A549 (cell line): ENCODE measurements at regions of chr5 and their contacts with region 1.

Region 1: DNA sequence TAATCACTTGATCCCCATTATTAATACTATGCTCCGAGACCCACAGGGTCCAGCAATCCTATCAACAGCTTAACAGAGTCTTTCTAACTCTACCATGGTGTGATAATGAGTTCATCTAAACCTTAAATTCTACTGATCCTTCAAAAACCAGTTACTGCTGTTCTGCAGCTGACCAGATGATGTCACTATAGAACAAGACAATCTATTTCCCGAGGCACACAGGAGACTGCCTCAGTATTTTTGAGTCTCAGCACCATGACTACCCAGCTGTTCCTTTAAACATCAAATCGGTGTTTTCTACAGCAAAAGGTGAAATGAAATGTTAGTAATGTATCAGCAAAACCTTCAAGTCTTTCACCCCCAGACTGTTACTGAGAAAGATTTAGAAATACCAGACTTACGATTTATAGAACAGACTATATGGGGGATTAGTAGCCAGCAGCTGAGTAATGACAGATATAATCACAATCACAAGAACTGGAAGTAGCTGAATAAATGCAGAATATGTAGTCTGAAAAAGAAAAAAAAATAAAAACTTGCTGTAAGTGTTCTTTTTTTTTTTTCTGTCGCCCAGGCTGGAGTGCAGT is 16.9 kb downstream of the DNAJC18 start:
- DNase-seq: peak; percentile 69 to 85
- ATAC-seq: peak; percentile 87 to 92
- H3K4me3 ChIP-seq: no peak overlapping the region
- H3K27ac ChIP-seq: no peak overlapping the region
- H3K4me1 ChIP-seq: no peaks in the 10 kb centered on the region
- CTCF ChIP-seq: peak; percentile 95
- EP300 ChIP-seq: no peak
- POLR2A ChIP-seq: no peak
- RAD21 ChIP-seq: peak; percentile 92 to 97

Region 2: DNA sequence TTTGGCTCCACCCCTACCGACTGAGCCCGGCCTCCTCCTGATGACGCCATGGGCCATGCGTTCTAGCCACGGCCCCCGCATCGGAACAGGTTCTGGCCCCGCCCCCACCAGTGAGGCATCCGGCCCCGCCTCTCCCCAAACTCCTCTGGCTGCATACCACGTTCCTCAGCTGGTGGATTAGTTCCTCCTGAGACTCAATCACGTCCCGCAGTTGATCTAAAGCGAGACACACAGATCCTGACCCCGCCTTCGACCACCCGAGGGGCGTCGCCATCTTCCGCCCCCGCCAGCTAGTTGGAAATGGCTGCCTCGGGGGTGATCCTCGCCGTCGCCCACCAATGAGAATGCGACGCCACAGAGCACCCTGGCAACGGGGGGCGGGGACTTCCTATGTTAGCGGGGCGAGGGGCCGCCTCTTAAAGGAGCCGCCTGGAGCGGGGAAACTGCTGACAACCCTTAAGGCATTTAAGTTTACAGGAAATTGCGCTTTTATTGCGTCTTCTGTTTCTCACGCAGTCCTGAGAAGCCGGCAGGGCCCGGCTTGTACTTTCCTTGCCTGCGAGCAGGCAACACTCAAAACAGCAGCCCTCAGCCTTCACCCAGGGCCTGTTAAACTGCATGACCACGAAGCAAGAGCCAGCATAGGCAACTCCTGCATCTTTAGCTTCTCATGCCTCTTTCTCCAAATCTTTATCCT is 18.5 kb before region 1 on chr5 and contains the start of gene SPATA24:
- CTCF ChIA-PET with region 1: interaction called, 57 read pairs
- POLR2A ChIA-PET with region 1: no interaction called
- DNase-seq: peak; percentile 96 to 97
- ATAC-seq: peak; percentile 89 to 95
- H3K4me3 ChIP-seq: peak within 1 kb of the TSS; percentile 45
- H3K27ac ChIP-seq: peak within 1 kb of the TSS; percentile 86 to 91
- H3K4me1 ChIP-seq: peaks cover 12% of the 10 kb centered on the region
- CTCF ChIP-seq: no peak
- EP300 ChIP-seq: no peak
- POLR2A ChIP-seq: peak; percentile 36
- RAD21 ChIP-seq: no peak
- polyA plus RNA-seq, gene SPATA24: 4.5 and 5.7 TPM in 2 replicates

Region 3: DNA sequence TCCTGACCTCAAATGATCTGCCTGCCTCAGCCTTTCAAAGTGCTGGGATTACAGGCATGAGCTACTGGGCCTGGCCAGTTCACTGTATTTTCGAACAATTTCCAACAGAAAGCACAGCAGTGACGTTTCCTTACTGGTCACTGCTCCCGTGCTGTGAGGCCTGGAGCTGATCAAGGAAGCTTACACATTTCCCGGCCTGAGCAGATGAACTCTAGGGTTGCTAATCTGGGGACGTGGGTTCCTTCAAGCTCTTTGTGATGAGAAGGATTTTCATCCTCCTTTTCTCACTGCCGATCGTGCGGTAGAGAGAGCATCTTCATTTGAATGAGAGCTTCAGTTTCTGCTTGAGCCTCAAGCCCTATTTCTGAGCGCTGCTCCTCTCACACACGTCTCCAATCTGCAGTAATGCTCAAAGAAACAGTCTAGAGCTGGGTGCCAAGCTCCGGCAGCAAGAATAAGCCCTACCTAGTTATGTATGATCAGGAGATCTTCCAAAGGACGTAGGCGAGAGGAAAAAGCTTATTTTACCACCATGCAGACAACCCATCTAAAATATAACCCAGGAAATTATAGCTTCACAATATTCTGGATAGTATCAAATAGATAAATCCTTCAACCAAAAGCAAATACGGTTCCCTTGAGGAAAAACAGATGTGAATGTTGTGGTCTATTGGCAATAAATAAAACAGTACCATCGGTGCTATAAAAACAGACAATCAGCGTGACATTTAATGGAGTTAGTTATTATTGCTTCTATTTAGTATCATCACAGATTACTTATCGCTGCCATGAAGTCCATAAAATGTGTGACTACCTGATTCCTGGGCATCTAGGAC is 11.2 kb before region 1 on chr5:
- CTCF ChIA-PET with region 1: interaction called, 57 read pairs
- POLR2A ChIA-PET with region 1: no interaction called
- DNase-seq: no peak
- ATAC-seq: no peak
- H3K4me3 ChIP-seq: no peak overlapping the region
- H3K27ac ChIP-seq: no peak overlapping the region
- H3K4me1 ChIP-seq: no peaks in the 10 kb centered on the region
- CTCF ChIP-seq: no peak
- EP300 ChIP-seq: no peak
- POLR2A ChIP-seq: no peak
- RAD21 ChIP-seq: no peak

Region 4: DNA sequence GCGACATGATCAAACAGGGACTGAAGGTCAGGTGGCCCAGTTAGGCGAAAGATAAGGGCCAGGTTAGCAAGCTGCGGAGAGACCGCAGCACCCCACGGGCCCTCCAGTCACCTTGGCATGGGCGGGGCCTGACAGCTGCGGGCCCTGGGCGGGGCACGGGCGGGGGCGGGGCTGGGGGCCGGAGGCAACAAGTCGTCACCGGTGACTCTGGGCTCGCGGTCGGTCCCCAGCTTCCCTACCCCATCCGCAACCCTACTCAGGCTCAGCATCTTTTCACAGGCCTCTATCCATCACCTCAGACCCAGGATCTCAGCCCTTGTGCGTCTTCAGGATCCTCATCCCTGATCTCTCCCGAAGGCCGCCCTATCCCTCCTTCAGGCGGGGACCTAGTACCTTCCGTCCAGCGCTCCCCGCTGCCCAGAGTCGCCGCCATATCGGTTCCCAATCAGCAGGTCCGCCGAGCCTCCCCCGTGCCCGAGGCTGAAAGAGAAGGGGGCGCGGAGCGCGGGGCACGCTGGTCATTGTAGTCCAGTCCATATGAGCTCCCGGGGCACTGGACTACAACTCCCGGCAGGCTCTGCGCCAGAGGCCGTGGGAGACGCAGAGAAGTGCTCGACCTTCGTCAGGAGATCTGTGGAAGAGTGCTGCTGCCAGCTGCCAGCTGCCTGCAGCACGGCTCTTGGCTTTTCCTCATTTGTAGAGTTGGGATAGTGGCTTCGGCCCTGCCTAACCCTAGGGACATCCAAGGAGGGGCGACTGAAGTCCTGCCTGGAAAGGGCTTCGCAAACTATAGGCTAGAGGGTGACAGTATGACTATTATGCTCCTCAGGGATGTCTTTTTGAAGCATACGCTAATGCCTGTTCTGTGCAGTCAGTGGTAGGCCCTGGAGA is 16.9 kb after region 1 on chr5 and contains the start of gene DNAJC18:
- CTCF ChIA-PET with region 1: interaction called, 88 read pairs
- POLR2A ChIA-PET with region 1: interaction called, 3 read pairs
- DNase-seq: peak; percentile 85 to 95
- ATAC-seq: peak; percentile 98 to 99
- H3K4me3 ChIP-seq: peak within 1 kb of the TSS; percentile 73
- H3K27ac ChIP-seq: peak within 1 kb of the TSS; percentile 81 to 90
- H3K4me1 ChIP-seq: peaks cover 8% of the 10 kb centered on the region; the same call in 1 of the 3 replicates
- CTCF ChIP-seq: no peak
- EP300 ChIP-seq: no peak
- POLR2A ChIP-seq: peak; percentile 38
- RAD21 ChIP-seq: no peak
- polyA plus RNA-seq, gene DNAJC18: 5.3 TPM in 2 replicates

Region 5: DNA sequence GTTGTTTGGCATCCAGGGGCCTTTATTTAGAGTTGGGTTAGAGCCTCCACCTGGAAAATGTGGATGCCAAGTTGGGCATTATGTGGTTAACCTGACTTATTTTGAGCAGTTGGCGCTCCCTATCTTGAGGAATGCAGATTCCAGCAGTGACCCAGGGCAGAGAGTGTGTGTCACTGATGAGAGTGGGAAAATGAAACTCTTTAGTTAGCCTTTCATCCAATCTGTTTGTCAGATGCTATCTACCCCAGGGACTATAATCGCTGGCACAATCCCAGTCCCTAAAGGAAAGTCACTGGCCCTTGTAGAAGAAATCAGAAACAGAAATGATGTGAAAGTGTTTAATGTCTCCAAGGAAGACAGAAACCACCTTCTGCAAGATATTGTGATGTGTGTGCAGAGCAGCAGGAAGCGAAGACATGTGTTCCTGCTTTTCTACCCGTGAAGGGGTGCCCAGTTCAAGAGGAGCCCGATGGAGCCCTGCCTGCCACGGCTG is 70.3 kb after region 1 on chr5:
- CTCF ChIA-PET with region 1: interaction called, 19 read pairs
- POLR2A ChIA-PET with region 1: no interaction called
- DNase-seq: peak in 1 of 2 experiments; percentile 29
- ATAC-seq: peak in 1 of 2 experiments; percentile 62; a peak in 3 of 6 replicates
- H3K4me3 ChIP-seq: no peak overlapping the region
- H3K27ac ChIP-seq: no peak overlapping the region
- H3K4me1 ChIP-seq: peaks cover 16% of the 10 kb centered on the region
- CTCF ChIP-seq: no peak
- EP300 ChIP-seq: no peak
- POLR2A ChIP-seq: no peak
- RAD21 ChIP-seq: no peak

Region 6: GRCh38 chr5:139501381-139501780 is 79.0 kb after region 1 on chr5:
- CTCF ChIA-PET with region 1: interaction called, 22 read pairs
- POLR2A ChIA-PET with region 1: no interaction called
- DNase-seq: no peak
- ATAC-seq: no peak
- H3K4me3 ChIP-seq: no peak overlapping the region
- H3K27ac ChIP-seq: no peak overlapping the region
- H3K4me1 ChIP-seq: peaks cover 1% of the 10 kb centered on the region; the same call in 2 of the 3 replicates
- CTCF ChIP-seq: no peak
- EP300 ChIP-seq: no peak
- POLR2A ChIP-seq: no peak
- RAD21 ChIP-seq: no peak

Region 7: DNA sequence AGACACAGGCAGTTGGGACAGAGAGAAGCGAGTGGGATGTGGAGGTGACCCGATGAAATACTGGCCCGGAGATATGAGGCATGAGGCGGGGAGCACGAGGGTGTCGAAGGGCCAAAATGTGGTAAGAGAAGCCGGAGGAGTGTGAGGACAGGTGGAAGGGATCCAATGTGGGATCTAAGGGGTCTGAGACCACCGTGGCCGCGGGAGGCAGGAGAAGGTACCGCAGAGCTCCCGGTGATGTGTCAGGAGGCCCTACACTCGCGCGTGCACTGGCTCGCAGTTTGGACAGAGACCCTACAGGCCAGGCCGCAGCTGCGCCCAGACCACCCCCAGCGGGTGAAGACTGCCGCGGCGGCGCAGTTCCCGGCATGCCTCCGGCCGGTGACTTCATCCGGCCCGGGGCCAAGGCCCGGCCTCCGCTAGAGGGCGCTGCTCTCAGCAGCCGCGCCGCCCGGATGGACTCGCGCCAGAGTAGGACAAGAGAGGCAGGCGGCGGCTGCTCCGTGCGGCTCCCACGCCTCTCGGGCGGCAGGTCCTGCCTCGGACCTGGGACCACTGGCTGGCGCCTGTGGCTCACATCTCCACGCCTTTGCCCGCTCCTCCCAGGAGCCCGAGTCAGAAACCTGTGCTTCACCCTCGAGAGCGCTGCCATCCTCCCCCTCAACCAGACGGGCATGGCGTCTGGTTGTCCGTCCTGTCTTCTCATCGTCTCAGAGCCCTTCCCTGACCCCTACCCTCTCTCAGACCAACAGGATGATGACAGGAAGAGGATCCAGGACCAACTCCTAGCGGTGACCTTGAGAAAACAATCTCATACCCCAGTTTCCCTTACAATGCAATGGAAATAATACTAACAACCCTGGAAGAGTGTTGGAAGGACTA is 95.5 kb after region 1 on chr5:
- CTCF ChIA-PET with region 1: interaction called, 392 read pairs
- POLR2A ChIA-PET with region 1: no interaction called
- DNase-seq: peak; percentile 89 to 94
- ATAC-seq: peak; percentile 86 to 91
- H3K4me3 ChIP-seq: peak overlapping the region; percentile 50
- H3K27ac ChIP-seq: peak overlapping the region; percentile 91 to 92
- H3K4me1 ChIP-seq: 0 out of 3 replicates have a peak, but pooled peaks cover 3% of the 10 kb centered on the region
- CTCF ChIP-seq: peak; percentile 98
- EP300 ChIP-seq: no peak; a peak in 1 of 5 replicates
- POLR2A ChIP-seq: peak; percentile 84
- RAD21 ChIP-seq: peak; percentile 48 to 63